Aorta (tissue), 5 donors: ENCODE measurements at regions of chr2 and their contacts with region 1.

Region 1: DNA sequence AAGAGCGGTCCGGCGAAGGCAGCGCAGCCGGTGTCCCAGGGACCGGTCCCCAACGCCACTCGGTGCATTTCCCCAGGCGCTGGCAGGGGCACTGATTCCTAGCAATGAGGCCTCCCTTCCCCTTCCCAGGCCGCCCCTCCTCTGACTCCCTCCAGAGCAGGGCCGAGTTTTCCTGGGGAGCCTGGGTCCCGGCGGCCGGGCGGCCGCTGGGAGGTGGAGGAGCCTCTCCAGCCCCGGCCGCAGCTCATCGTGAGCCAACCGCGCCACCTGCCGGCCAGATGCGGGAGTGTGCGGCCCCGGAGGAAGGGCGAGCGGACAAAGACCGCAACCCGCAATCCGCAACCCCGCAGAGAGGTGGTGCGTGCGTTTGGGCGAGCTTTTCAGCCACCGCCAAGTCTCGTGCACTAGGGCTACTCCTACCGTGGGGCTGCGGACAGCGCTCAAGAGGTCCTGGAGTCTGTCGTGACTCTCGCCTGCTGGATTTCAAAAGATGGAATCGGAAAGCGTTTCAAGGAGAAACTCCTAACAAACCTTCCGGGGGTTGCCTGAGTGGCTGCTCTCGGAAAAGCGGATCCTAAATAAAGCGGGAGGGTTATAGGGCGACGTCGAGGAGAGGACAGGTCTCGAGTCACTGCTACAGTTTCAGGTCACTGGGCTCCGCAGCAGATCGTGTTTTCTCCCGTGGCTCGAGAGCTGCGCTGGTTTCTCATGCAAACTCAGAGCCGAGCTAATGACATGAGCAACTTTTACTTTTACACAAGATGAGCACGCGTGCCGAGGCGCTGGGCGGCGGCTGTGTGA is 1.5 kb upstream of the EPHA4 start:
- DNase-seq: peak; percentile 83 to 96
- ATAC-seq: peak; percentile 92
- H3K4me3 ChIP-seq: peak overlapping the region; percentile 46 to 66
- H3K27ac ChIP-seq: peak overlapping the region in 1 of 2 donors; percentile 41
- H3K4me1 ChIP-seq: no peaks in the 10 kb centered on the region
- H3K27me3 ChIP-seq: no peaks in the 10 kb centered on the region

Region 2: DNA sequence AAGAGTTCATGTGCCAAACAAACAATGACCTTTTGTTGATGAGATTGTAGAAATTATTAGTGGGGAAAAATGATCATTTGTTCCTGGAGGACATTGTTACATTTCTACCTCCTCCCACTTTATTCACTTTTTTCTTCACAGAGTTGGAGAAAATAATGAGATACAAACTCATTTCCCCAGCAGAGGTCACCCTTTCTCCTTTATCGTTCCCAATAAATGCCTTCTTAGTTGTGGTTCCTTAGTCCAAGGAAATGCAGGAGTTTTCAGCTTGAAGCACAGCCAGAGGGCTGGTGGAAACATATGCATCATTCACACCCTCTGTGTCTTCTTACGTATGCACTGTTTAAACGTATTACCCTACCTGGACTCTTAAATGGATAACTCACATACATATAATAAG is 1837.4 kb before region 1 on chr2:
- intact Hi-C with region 1: loop called in 1 of 2 experiments (anchors 10 kb)
- DNase-seq: no peak
- ATAC-seq: no peak
- H3K4me3 ChIP-seq: no peak overlapping the region
- H3K27ac ChIP-seq: no peak overlapping the region
- H3K4me1 ChIP-seq: no peaks in the 10 kb centered on the region
- H3K27me3 ChIP-seq: no peaks in the 10 kb centered on the region

Region 3: DNA sequence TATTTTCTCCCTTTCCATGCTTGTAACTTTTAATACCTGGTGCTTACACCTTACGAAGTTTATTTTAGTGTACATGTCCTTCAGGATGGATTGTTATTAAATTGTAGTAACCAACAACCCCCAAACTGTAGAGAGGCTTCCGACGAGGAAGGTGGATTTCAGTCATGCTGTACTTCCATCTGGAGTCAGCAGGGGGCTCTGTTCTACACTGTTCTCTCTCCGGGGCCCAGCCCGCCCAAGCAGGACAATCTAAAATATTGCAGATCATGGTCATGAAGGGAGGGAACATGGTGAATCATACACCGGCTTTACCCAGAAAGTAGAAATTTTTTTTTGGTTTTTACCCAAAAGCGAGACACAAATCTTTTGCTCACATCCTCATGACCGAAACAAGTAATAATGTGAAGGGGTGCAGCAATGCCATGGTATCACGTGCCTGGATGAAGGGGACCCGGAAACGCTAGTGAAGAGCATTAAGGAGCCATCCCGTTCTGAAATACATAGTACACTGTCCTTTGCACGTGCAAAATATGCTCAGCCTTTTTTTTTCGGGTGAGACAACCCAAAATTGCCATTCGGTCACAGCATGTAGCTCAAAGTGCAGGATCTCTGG is 886.3 kb before region 1 on chr2:
- intact Hi-C with region 1: loop called (anchors 1 to 2 kb)
- DNase-seq: peak; percentile 78 to 84
- ATAC-seq: peak; percentile 86
- H3K4me3 ChIP-seq: no peak overlapping the region
- H3K27ac ChIP-seq: no peak overlapping the region
- H3K4me1 ChIP-seq: no peaks in the 10 kb centered on the region
- H3K27me3 ChIP-seq: no peaks in the 10 kb centered on the region

Region 4: GRCh38 chr2:221228214-221228769 is 345.3 kb before region 1 on chr2:
- intact Hi-C with region 1: loop called (anchors 10 kb)
- DNase-seq: no peak
- ATAC-seq: peak; percentile 76
- H3K4me3 ChIP-seq: no peak overlapping the region
- H3K27ac ChIP-seq: peak overlapping the region in 1 of 2 donors; percentile 12
- H3K4me1 ChIP-seq: peaks cover 0 to 6% of the 10 kb centered on the region in 2 donors
- H3K27me3 ChIP-seq: no peaks in the 10 kb centered on the region

Region 5: GRCh38 chr2:221606424-221606823 is 32.8 kb after region 1 on chr2:
- intact Hi-C with region 1: no loop called
- DNase-seq: no peak
- ATAC-seq: no peak
- H3K4me3 ChIP-seq: no peak overlapping the region
- H3K27ac ChIP-seq: no peak overlapping the region
- H3K4me1 ChIP-seq: peaks cover 0 to 2% of the 10 kb centered on the region in 2 donors
- H3K27me3 ChIP-seq: no peaks in the 10 kb centered on the region

Region 6: DNA sequence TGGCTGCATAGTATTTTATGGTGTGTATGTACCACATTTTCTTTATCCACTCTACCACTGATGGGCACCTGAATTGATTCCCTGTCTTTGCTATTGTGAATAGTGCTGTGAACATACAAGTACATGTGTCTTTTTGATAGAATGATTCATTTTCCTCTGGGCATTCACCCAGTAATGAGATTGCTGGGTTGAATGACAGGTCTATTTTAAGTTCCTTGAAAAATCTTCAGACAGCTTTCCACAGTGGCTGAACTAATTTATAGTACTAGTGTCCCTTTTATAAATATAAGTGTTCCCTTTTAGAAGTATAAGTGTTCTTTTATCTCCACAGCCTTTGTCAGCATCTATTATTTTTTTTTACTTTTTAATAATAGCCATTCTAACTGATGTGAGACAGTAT is 302.4 kb after region 1 on chr2:
- intact Hi-C with region 1: no loop called
- DNase-seq: no peak
- ATAC-seq: no peak
- H3K4me3 ChIP-seq: no peak overlapping the region
- H3K27ac ChIP-seq: no peak overlapping the region
- H3K4me1 ChIP-seq: no peaks in the 10 kb centered on the region
- H3K27me3 ChIP-seq: no peaks in the 10 kb centered on the region

Region 7: DNA sequence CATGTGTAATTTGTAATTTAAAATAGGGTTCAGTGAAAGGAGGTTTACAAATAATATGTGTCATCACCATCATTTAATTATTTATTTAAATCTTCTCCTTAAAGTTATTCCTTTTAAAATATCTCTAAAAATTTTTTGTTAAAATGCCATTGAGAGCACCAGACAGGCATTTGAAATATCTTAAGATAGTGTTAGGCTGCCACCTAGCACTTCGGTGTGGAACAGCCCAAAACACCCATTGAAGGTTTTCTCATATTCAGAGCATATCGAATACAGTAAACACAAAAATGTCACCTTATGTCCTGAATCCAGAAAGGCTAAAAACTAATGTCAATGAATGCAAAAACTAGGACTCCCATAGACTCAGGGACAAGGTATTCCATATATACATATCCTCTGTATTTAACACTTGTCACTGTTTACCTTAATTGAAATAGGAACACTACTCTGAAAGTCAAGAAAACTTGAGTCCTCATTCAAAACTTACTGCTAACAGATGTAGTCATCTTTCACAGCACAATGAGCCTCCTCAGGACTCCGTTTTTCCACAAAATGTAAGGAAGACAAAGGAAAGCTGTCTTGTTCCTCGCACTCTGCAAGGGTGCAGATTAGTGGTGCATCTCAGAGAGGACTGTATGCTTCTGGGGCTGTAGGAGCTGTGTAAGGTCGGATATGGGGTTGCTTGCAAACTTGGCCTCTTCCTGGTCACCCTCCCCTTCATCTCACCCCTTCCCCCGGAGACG is 395.6 kb after region 1 on chr2:
- intact Hi-C with region 1: loop called in 1 of 2 experiments (anchors 10 kb)
- DNase-seq: no peak
- ATAC-seq: no peak
- H3K4me3 ChIP-seq: no peak overlapping the region
- H3K27ac ChIP-seq: no peak overlapping the region
- H3K4me1 ChIP-seq: no peaks in the 10 kb centered on the region
- H3K27me3 ChIP-seq: no peaks in the 10 kb centered on the region